Caco-2 (cell line): ENCODE measurements at regions of chr22 and their contacts with region 1.

Region 1: DNA sequence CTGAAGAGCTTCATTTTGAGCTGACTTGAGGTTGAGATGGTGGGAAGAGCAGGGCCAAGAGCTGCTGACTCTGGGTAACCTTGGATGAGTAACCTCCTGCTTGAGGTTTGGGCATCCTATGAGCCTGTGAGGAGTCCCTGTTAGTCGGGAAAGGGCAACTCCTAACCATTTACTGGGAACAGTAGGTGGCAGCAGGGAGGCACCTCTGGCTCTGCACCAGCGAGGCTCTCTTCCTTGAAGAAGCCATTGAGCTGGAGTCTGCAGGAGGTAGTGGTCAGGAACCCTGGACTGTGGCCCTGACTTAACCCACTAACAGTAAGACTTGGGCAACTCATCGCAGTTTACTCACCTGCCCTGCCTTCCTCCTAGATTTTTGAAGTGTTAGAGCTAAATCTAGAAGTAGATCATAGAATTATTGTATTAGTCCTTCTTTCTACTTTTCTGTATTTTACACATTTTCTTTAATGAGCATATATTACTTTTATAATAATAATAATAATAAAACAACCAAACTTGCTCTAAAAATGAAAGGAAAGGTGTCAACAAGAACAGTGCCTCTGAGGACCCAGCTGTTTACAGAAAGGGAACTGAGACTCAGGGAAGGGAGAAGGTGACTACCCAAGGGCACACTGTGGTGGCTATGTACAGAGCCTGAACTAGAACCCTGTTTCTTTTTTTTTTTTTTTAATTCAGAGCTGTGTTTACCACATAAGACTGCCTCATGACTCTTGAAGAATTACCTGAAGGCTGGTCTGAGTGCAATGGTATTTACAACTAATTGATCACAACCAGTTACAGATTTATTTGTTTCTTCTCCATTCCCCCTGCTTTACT is 47.5 kb downstream of the MEI1 start:
- DNase-seq: peak; percentile 80 to 84
- H3K4me3 ChIP-seq: no peak overlapping the region
- H3K4me3 Mint-ChIP-seq: no peak overlapping the region
- H3K27ac Mint-ChIP-seq: no peak overlapping the region
- H3K4me1 ChIP-seq: no peaks in the 10 kb centered on the region
- H3K4me1 Mint-ChIP-seq: no peaks in the 10 kb centered on the region
- H3K27me3 ChIP-seq: no peaks in the 10 kb centered on the region
- H3K27me3 Mint-ChIP-seq: peaks cover 3% of the 10 kb centered on the region
- CTCF ChIP-seq: peak; percentile 62 to 91

Region 2: GRCh38 chr22:41656556-41656955 is 90.2 kb before region 1 on chr22:
- CTCF ChIA-PET with region 1: no interaction called
- POLR2A ChIA-PET with region 1: no interaction called
- intact Hi-C with region 1: no loop called
- DNase-seq: no peak
- H3K4me3 ChIP-seq: no peak overlapping the region
- H3K4me3 Mint-ChIP-seq: no peak overlapping the region
- H3K27ac Mint-ChIP-seq: no peak overlapping the region
- H3K4me1 ChIP-seq: no peaks in the 10 kb centered on the region
- H3K4me1 Mint-ChIP-seq: no peaks in the 10 kb centered on the region
- H3K27me3 ChIP-seq: no peaks in the 10 kb centered on the region
- H3K27me3 Mint-ChIP-seq: no peaks in the 10 kb centered on the region
- CTCF ChIP-seq: no peak

Region 3: GRCh38 chr22:41810022-41810421 is 63.2 kb after region 1 on chr22:
- CTCF ChIA-PET with region 1: interaction called, 13 read pairs
- POLR2A ChIA-PET with region 1: no interaction called
- intact Hi-C with region 1: no loop called
- DNase-seq: no peak
- H3K4me3 ChIP-seq: no peak overlapping the region
- H3K4me3 Mint-ChIP-seq: no peak overlapping the region
- H3K27ac Mint-ChIP-seq: no peak overlapping the region
- H3K4me1 ChIP-seq: no peaks in the 10 kb centered on the region
- H3K4me1 Mint-ChIP-seq: no peaks in the 10 kb centered on the region
- H3K27me3 ChIP-seq: no peaks in the 10 kb centered on the region
- H3K27me3 Mint-ChIP-seq: no peaks in the 10 kb centered on the region
- CTCF ChIP-seq: no peak